ENCODE measurements at regions of chr1 and their contacts with region 1.

Region 1: GRCh38 chr1:36342481-36343478 is 19.3 kb upstream of the EVA1B start:
- DNase-seq: peak; percentile 44 to 61
- ATAC-seq: peak; percentile 83 to 92
- H3K4me3 ChIP-seq: no peak overlapping the region
- H3K27ac ChIP-seq: peak overlapping the region; percentile 45 to 78; a peak in 4 of 6 replicates
- H3K4me1 ChIP-seq: peaks cover 10% of the 10 kb centered on the region
- CTCF ChIP-seq: peak; percentile 79
- EP300 ChIP-seq: no peak
- POLR2A ChIP-seq: no peak
- RAD21 ChIP-seq: peak; percentile 89 to 94

Region 2: DNA sequence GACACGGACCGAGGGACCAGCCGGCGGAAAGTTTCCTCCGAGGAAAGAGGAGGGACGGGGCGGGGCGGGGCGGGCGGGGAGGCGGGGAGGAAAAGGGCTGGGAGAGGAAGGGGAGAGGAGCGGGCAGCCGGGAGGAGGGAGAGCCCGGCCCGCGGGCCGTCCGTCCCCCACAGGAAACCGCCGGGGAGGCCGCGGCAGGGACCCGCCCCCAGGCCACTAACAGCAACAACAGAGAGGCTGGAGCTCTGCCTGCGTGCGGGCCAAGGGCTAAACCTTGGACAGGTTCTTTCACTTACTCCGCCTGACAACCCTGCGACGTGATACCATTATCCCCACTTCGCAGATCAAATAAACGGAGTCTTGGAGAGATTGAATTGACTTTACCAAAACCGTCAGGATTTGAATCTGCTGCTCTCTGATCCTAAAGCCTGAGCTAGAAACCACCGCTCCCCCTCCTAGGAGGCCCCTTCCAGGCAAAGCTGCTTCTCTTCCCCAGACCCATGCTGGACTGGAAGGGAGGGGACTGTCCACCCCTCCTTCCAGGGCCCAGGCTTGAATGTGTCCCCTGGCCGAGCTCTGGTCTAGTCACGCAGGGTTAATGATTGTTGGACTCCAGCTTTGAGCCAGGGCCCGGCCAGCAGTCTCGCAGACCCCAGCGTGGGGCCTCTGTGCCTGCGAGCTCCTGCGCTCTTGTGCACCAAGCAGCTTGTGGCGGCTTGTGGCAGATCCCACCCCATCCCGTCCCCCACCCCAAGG is 19.0 kb before region 1 on chr1 and contains the start of gene EVA1B:
- CTCF ChIA-PET with region 1: interaction called, 33 read pairs
- POLR2A ChIA-PET with region 1: no interaction called
- DNase-seq: peak; percentile 32 to 51
- ATAC-seq: peak; percentile 67 to 75
- H3K4me3 ChIP-seq: peak within 1 kb of the TSS; percentile 79
- H3K27ac ChIP-seq: peak within 1 kb of the TSS; percentile 76 to 96
- H3K4me1 ChIP-seq: peaks cover 11% of the 10 kb centered on the region; the same call in 2 of the 3 replicates
- CTCF ChIP-seq: no peak
- EP300 ChIP-seq: no peak
- POLR2A ChIP-seq: no peak
- RAD21 ChIP-seq: no peak
- polyA plus RNA-seq, gene EVA1B: 2.0 and 2.9 TPM in 2 replicates

Region 3: GRCh38 chr1:36359911-36360550 is 17.3 kb after region 1 on chr1:
- CTCF ChIA-PET with region 1: interaction called, 201 read pairs
- POLR2A ChIA-PET with region 1: no interaction called
- DNase-seq: no peak
- ATAC-seq: no peak
- H3K4me3 ChIP-seq: no peak overlapping the region
- H3K27ac ChIP-seq: no peak overlapping the region
- H3K4me1 ChIP-seq: peaks cover 5% of the 10 kb centered on the region; the same call in 1 of the 3 replicates
- CTCF ChIP-seq: no peak
- EP300 ChIP-seq: no peak
- POLR2A ChIP-seq: no peak
- RAD21 ChIP-seq: no peak

Region 4: DNA sequence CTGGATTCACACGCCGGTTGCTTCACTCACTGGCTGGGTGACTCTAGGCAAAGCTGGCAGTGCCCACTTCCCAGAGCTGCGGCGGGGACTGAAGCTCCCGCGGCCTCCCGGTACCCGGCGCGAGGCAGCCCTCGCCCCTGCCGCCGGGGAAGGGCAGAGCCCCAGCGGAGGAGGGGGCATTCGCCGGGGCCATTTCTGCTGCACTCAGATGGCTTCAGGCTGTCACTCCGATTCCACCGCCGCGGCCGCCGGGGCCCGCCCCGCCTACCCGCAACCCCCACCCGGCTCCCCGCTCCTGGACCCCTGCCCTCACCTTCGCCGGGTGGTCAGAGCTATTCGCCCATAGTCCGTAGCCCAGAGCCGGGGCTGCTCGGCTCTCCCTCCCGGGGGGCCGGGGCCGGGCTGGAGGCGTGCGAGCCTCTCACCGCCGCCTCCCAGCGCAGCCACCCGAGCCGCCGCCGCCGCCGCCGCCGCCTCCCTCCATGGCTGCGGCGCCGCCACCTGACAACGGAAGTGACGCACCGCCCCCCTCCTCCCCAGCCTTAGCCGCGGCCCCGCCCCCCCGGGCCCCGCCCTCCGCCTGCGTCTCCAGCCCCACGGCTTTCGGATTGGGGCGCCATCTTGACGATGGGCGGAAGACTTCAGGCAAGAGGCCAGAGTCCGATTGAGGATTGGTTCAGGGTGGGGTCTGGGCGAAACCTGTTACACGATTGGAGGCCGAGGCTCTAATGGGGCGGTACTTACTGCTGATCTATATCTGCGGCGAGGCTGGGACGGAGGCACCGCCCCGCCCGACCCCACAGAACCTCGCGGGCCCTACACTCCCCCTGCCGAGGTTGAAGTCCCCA is 42.9 kb after region 1 on chr1 and contains the start of gene STK40:
- CTCF ChIA-PET with region 1: interaction called, 25 read pairs
- POLR2A ChIA-PET with region 1: interaction called, 4 read pairs
- DNase-seq: peak; percentile 83 to 98
- ATAC-seq: peak; percentile 83 to 94
- H3K4me3 ChIP-seq: peak within 1 kb of the TSS; percentile 72
- H3K27ac ChIP-seq: peak within 1 kb of the TSS; percentile 96 to 100
- H3K4me1 ChIP-seq: peaks cover 28% of the 10 kb centered on the region
- CTCF ChIP-seq: no peak
- EP300 ChIP-seq: no peak
- POLR2A ChIP-seq: peak; percentile 29; the same call in 1 of the 2 replicates
- RAD21 ChIP-seq: no peak
- polyA plus RNA-seq, gene STK40: 8.9 and 10.5 TPM in 2 replicates

Region 5: DNA sequence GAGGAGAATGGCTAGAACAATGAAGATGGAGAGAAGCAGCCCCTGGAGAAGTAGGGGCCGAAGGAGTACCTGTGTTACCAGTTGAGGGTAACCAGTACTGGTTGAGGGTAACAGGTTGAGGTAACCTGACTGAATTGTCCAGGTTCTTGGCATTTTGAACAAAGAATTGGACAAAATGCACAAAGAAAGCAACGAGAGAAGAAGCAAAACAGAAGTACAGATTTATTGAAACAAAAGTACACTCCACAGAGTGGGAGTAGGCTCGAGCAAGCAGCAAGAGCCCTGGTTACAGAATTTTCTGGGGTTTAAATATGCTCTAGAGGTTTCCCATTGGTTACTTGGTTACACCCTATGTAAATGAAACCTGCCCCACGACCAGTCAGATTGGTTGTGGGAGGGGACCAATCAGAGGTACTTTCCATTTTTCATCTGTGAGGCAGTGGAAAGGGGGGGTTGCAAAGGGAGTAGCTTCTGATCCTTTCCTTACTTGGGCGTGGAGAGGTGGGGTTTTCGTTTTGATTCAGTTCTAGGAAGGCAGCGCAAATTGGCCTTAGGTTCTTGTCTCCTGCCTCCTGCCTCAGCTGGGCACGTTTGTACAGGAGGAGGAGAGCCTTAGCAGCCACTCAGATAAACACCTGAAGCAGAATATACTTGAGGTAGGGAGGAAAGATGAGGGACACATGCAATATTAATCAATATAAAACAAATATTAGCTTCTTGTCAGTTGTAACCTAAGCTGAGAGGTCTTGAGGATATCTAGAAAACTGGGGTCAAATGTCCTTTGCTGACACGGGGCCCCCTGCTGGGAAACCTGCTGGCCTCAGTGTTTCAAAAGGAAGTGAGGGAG is 69.1 kb after region 1 on chr1:
- CTCF ChIA-PET with region 1: interaction called, 37 read pairs
- POLR2A ChIA-PET with region 1: interaction called, 7 read pairs
- DNase-seq: peak in 1 of 2 experiments; percentile 30
- ATAC-seq: peak in 1 of 2 experiments; percentile 74; a peak in 3 of 6 replicates
- H3K4me3 ChIP-seq: no peak overlapping the region
- H3K27ac ChIP-seq: no peak overlapping the region
- H3K4me1 ChIP-seq: no peaks in the 10 kb centered on the region
- CTCF ChIP-seq: no peak
- EP300 ChIP-seq: no peak
- POLR2A ChIP-seq: no peak
- RAD21 ChIP-seq: no peak

Region 6: GRCh38 chr1:36450270-36450918 is 107.6 kb after region 1 on chr1 and contains the start of gene OSCP1:
- CTCF ChIA-PET with region 1: interaction called, 13 read pairs
- POLR2A ChIA-PET with region 1: no interaction called
- DNase-seq: peak; percentile 94 to 99
- ATAC-seq: peak; percentile 98 to 99
- H3K4me3 ChIP-seq: peak within 1 kb of the TSS; percentile 53
- H3K27ac ChIP-seq: peak within 1 kb of the TSS; percentile 87 to 91
- H3K4me1 ChIP-seq: peaks cover 3% of the 10 kb centered on the region; the same call in 1 of the 3 replicates
- CTCF ChIP-seq: no peak
- EP300 ChIP-seq: no peak
- POLR2A ChIP-seq: peak; percentile 63
- RAD21 ChIP-seq: no peak
- polyA plus RNA-seq, gene OSCP1: 6.6 and 6.8 TPM in 2 replicates

Measured in A549 (cell line).